B cell (primary cell): ENCODE measurements at regions of chr14 and their contacts with region 1.

Region 1: DNA sequence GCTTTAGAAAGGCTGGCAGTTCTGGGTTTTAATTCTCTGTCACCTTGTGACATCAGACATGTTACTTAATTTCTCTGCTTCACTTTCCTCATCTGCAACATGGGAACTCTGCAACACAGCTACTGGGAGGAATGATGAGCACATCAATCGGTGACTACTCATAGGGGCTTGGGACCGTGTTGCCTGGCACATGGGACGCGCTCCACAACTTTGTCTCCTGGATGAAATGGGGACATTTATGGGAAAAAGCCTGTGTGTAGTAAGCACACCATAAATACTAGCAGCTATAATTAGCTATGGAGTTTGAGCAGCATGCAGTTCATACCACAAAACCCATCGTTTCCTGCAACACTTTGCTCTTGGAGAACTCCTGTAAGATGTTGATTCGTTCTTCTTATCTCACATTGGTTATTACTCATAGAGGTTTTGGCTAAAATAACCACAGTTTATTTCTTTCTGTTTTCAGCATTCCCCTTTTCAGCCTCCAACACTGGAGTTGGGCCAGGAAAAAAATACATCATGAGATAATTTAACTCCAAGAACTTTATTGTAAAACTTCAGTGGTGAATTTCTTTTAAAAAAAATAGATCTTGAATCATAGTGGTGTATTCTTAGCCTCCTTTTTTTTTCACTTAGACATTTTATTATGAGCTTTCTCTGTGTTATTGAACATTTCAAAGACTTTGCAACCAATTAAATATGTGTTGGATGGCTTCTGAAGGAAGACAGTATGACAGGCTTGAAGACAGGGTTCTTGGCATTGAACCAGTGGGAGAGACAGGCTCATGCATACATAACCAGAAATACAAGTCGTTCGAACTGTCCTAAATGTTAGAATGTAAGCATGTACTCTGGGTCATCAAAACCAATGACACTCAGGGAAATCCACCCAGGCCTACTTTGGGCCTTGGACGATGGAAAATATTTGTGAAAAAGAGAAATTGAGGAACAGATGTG is 72.7 kb downstream of the RIN3 start:
- DNase-seq: no peak
- ATAC-seq: no peak
- H3K4me3 ChIP-seq: no peak overlapping the region
- H3K4me3 Mint-ChIP-seq: peak overlapping the region; percentile 20
- H3K27ac ChIP-seq: peak overlapping the region in 1 of 2 donors; percentile 5
- H3K27ac Mint-ChIP-seq: peak overlapping the region; percentile 72
- H3K4me1 ChIP-seq: peaks cover 61 to 74% of the 10 kb centered on the region in 2 donors
- H3K4me1 Mint-ChIP-seq: peaks cover 77% of the 10 kb centered on the region
- H3K27me3 ChIP-seq: no peaks in the 10 kb centered on the region
- H3K27me3 Mint-ChIP-seq: no peaks in the 10 kb centered on the region
- CTCF ChIP-seq: no peak

Region 2: GRCh38 chr14:92568621-92569479 is 17.4 kb before region 1 on chr14:
- CTCF ChIA-PET with region 1: interaction called, 30 read pairs
- POLR2A ChIA-PET with region 1: no interaction called
- intact Hi-C with region 1: no loop called
- DNase-seq: peak; percentile 82
- ATAC-seq: peak; percentile 80
- H3K4me3 ChIP-seq: peak overlapping the region in 3 of 5 experiments; percentile 4 to 22 (median 16)
- H3K4me3 Mint-ChIP-seq: peak overlapping the region; percentile 77
- H3K27ac ChIP-seq: peak overlapping the region; percentile 90 to 94
- H3K27ac Mint-ChIP-seq: peak overlapping the region; percentile 94
- H3K4me1 ChIP-seq: peaks cover 27 to 32% of the 10 kb centered on the region in 2 donors
- H3K4me1 Mint-ChIP-seq: peaks cover 41% of the 10 kb centered on the region
- H3K27me3 ChIP-seq: no peaks in the 10 kb centered on the region
- H3K27me3 Mint-ChIP-seq: no peaks in the 10 kb centered on the region
- CTCF ChIP-seq: no peak

Region 3: GRCh38 chr14:92607702-92608429 is 21.6 kb after region 1 on chr14:
- CTCF ChIA-PET with region 1: interaction called, 29 read pairs
- POLR2A ChIA-PET with region 1: no interaction called
- intact Hi-C with region 1: no loop called
- DNase-seq: no peak
- ATAC-seq: no peak
- H3K4me3 ChIP-seq: no peak overlapping the region
- H3K4me3 Mint-ChIP-seq: no peak overlapping the region
- H3K27ac ChIP-seq: no peak overlapping the region
- H3K27ac Mint-ChIP-seq: no peak overlapping the region
- H3K4me1 ChIP-seq: peaks cover 18 to 25% of the 10 kb centered on the region in 2 donors
- H3K4me1 Mint-ChIP-seq: peaks cover 46% of the 10 kb centered on the region
- H3K27me3 ChIP-seq: no peaks in the 10 kb centered on the region
- H3K27me3 Mint-ChIP-seq: no peaks in the 10 kb centered on the region
- CTCF ChIP-seq: no peak

Region 4: DNA sequence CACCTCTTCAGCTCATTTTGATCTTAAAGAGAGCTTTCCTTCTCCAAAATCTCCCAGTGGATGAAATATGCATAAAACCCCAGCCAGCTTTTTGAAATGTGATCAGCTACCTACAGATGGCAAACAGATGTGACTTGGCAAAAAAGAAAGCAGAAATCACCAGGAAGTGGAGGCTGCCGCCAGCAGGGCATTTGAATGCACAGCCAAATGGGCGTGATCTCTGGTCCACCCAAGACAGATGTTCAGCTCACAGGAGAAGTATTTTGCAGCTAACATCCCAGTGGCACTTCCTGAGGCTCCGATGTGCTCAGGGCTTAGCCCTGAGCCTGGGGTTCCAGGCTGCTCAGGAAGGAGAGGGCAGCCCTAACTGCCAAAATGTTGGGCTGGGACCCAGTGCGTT is 83.9 kb after region 1 on chr14:
- CTCF ChIA-PET with region 1: interaction called, 13 read pairs
- POLR2A ChIA-PET with region 1: no interaction called
- intact Hi-C with region 1: no loop called
- DNase-seq: peak; percentile 50
- ATAC-seq: no peak
- H3K4me3 ChIP-seq: no peak overlapping the region
- H3K4me3 Mint-ChIP-seq: peak overlapping the region; percentile 33
- H3K27ac ChIP-seq: peak overlapping the region in 1 of 2 donors; percentile 29
- H3K27ac Mint-ChIP-seq: peak overlapping the region; percentile 75
- H3K4me1 ChIP-seq: peaks cover 53 to 74% of the 10 kb centered on the region in 2 donors
- H3K4me1 Mint-ChIP-seq: peaks cover 81% of the 10 kb centered on the region
- H3K27me3 ChIP-seq: no peaks in the 10 kb centered on the region
- H3K27me3 Mint-ChIP-seq: no peaks in the 10 kb centered on the region
- CTCF ChIP-seq: no peak

Region 5: DNA sequence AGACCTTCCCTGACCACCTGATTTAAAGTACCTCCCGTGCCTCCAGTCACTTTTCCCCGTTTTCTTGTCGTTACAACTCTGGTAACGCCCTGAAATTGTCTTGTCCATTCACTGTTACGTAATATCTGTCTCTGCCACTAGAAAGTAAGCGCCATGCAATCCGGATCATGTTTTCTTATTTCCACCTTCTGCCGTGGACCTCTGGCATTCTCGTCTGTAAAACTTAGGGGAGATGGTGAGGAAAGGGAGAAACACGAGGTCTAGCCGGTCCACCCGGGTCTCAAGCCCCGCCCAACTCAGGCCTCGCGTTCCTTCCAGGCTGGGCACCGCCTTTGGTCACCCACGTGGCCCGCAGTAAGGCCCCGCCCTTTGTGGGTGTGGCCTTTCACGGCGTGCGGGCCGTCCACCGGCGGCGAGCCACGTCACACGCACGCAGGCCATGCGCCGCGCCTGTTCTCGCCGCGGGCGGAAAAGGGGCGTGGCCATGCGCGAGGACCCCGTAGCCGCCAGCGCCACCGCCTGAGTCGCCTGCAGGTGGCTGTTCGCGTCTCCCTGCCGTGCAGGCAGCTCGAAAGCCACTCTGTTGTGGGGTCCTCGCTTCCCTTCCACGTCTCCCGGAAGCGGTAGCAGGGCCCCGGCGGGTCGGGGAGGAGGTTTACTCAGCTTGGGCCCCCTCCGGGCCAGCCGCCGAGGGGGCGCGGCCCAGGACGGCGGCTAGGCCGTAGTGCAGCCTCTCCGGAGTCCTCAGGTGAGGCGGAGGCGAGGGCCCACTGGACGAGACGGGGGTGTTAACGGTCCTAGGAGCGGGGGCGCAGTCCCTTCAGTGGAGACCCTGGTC is 207.7 kb after region 1 on chr14 and contains the start of gene GOLGA5:
- CTCF ChIA-PET with region 1: no interaction called
- POLR2A ChIA-PET with region 1: no interaction called
- intact Hi-C with region 1: no loop called
- DNase-seq: peak; percentile 99
- ATAC-seq: peak; percentile 94
- H3K4me3 ChIP-seq: peak within 1 kb of the TSS; percentile 84 to 100 (median 97)
- H3K4me3 Mint-ChIP-seq: peak within 1 kb of the TSS; percentile 83
- H3K27ac ChIP-seq: peak within 1 kb of the TSS; percentile 70 to 80
- H3K27ac Mint-ChIP-seq: peak within 1 kb of the TSS; percentile 80
- H3K4me1 ChIP-seq: peaks cover 19 to 22% of the 10 kb centered on the region in 2 donors
- H3K4me1 Mint-ChIP-seq: peaks cover 30% of the 10 kb centered on the region
- H3K27me3 ChIP-seq: no peaks in the 10 kb centered on the region
- H3K27me3 Mint-ChIP-seq: no peaks in the 10 kb centered on the region
- CTCF ChIP-seq: no peak
- total RNA-seq, gene GOLGA5: 21.2 and 23.1 TPM in 2 replicates

Region 6: GRCh38 chr14:92846162-92846897 is 260.1 kb after region 1 on chr14:
- CTCF ChIA-PET with region 1: no interaction called
- POLR2A ChIA-PET with region 1: no interaction called
- intact Hi-C with region 1: no loop called
- DNase-seq: peak; percentile 10
- ATAC-seq: peak; percentile 43
- H3K4me3 ChIP-seq: no peak overlapping the region
- H3K4me3 Mint-ChIP-seq: no peak overlapping the region
- H3K27ac ChIP-seq: no peak overlapping the region
- H3K27ac Mint-ChIP-seq: no peak overlapping the region
- H3K4me1 ChIP-seq: peaks cover 6 to 7% of the 10 kb centered on the region in 2 donors
- H3K4me1 Mint-ChIP-seq: peaks cover 20% of the 10 kb centered on the region
- H3K27me3 ChIP-seq: no peaks in the 10 kb centered on the region
- H3K27me3 Mint-ChIP-seq: no peaks in the 10 kb centered on the region
- CTCF ChIP-seq: no peak